WTC11 (cell line): ENCODE measurements at regions of chr18 and their contacts with region 1.

Region 1: DNA sequence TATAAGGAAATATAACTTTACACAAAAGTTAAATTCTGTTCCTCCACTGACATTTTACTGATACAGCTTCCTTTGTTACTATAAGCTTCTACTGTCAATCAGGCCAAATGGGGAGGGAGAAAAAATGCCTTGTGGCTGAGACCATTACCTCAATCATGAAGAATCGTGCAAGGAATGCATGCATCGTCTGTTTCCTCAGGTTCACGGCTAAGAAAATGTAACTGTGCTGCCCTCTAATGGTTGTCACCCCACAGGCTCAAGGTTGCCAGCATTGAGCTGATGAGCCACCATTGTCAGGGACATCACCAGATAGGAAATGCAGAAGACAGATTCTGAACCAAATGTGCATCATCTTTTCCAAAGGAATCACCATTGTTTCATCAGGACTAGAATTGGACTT is 426.9 kb downstream of the CDH2 start:
- DNase-seq: peak; percentile 69
- ATAC-seq: peak; percentile 98
- H3K4me3 Mint-ChIP-seq: no peak overlapping the region
- H3K27ac Mint-ChIP-seq: no peak overlapping the region
- H3K4me1 Mint-ChIP-seq: peaks cover 15% of the 10 kb centered on the region
- H3K27me3 Mint-ChIP-seq: no peaks in the 10 kb centered on the region
- CTCF ChIP-seq: peak; percentile 40

Region 2: GRCh38 chr18:27558388-27559155 is 191.4 kb before region 1 on chr18:
- CTCF ChIA-PET with region 1: no interaction called
- POLR2A ChIA-PET with region 1: no interaction called
- DNase-seq: no peak
- ATAC-seq: no peak
- H3K4me3 Mint-ChIP-seq: no peak overlapping the region
- H3K27ac Mint-ChIP-seq: peak overlapping the region; percentile 27
- H3K4me1 Mint-ChIP-seq: peaks cover 67% of the 10 kb centered on the region
- H3K27me3 Mint-ChIP-seq: peaks cover 4% of the 10 kb centered on the region
- CTCF ChIP-seq: no peak

Region 3: DNA sequence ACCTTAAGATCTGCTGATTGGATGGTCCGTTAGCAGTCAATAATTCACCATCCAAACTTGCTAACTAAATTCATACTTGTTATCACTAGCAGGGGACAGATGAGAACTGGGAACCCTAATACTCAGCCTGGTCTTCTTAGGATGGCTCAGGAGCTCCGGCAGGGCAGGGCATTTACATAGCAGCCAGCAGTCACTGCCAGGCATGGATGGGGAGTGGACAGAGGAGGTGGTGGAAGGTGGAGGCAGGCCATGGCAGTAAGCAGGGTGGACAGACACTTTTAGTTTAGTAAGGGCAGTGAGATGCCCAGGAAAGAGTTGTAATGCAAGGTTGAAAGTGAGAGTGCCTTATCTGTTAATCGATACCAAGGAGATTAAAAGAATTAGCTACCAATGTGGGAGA is 172.7 kb before region 1 on chr18:
- CTCF ChIA-PET with region 1: no interaction called
- POLR2A ChIA-PET with region 1: no interaction called
- DNase-seq: no peak
- ATAC-seq: peak; percentile 79
- H3K4me3 Mint-ChIP-seq: no peak overlapping the region
- H3K27ac Mint-ChIP-seq: peak overlapping the region; percentile 26
- H3K4me1 Mint-ChIP-seq: peaks cover 19% of the 10 kb centered on the region
- H3K27me3 Mint-ChIP-seq: no peaks in the 10 kb centered on the region
- CTCF ChIP-seq: no peak

Region 4: DNA sequence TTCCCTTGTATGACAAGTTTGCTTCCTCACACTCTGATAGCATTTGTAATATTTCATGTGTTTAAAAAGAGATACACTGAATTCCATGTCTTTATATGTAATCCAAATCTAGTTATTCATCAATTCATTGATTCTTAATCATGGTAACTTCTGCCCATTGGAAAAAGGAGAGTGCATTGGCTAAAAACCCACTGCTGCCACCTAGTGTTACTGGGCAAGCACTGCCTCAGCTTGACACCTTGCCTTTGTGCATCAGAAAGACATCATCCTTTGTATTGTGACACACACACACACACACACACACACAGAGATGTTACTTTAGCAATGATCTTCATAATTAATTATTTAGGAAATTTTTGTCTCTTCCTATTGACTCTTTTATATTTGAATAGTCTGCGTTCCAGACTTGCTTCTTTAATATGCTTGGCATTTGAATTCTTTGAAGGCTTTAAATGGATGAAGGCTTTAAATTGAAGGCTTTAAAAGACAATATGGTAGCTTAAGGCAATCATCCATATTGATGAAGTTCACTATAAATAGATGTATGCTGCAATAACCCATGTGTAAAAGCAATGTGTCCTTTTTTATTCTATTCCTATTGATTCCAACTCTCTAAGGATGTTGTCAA is 150.7 kb before region 1 on chr18:
- CTCF ChIA-PET with region 1: interaction called, 146 read pairs
- POLR2A ChIA-PET with region 1: interaction called, 4 read pairs
- DNase-seq: peak; percentile 68
- ATAC-seq: peak; percentile 59
- H3K4me3 Mint-ChIP-seq: no peak overlapping the region
- H3K27ac Mint-ChIP-seq: no peak overlapping the region
- H3K4me1 Mint-ChIP-seq: peaks cover 33% of the 10 kb centered on the region
- H3K27me3 Mint-ChIP-seq: no peaks in the 10 kb centered on the region
- CTCF ChIP-seq: peak; percentile 81

Region 5: DNA sequence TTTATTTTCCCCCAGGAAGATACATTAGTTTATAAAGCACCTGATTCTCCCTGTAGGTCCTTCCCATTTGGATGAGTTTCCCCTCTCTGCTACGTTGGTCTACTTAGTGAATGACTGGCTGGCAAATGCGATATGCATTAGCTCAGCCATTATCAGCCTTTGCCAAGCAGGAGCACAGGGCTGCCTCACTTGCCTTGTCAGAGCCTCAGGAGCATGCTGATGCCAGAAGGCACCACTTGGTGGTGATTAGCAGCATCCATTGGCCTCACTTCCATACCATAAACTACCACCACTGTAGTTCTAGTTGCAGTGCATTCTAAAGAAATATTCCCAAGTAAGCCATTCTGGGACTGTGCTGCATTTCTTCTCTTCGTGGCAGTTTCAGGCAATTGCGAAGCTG is 122.1 kb before region 1 on chr18:
- CTCF ChIA-PET with region 1: interaction called, 27 read pairs
- POLR2A ChIA-PET with region 1: no interaction called
- DNase-seq: peak; percentile 27
- ATAC-seq: peak; percentile 99
- H3K4me3 Mint-ChIP-seq: no peak overlapping the region
- H3K27ac Mint-ChIP-seq: no peak overlapping the region
- H3K4me1 Mint-ChIP-seq: no peaks in the 10 kb centered on the region
- H3K27me3 Mint-ChIP-seq: no peaks in the 10 kb centered on the region
- CTCF ChIP-seq: no peak

Region 6: GRCh38 chr18:27685807-27686412 is 64.1 kb before region 1 on chr18:
- CTCF ChIA-PET with region 1: interaction called, 40 read pairs
- POLR2A ChIA-PET with region 1: no interaction called
- DNase-seq: peak; percentile 32
- ATAC-seq: no peak
- H3K4me3 Mint-ChIP-seq: no peak overlapping the region
- H3K27ac Mint-ChIP-seq: no peak overlapping the region
- H3K4me1 Mint-ChIP-seq: no peaks in the 10 kb centered on the region
- H3K27me3 Mint-ChIP-seq: no peaks in the 10 kb centered on the region
- CTCF ChIP-seq: peak; percentile 76

Region 7: GRCh38 chr18:27762054-27762453 is 12.0 kb after region 1 on chr18:
- CTCF ChIA-PET with region 1: interaction called, 14 read pairs
- POLR2A ChIA-PET with region 1: no interaction called
- DNase-seq: no peak
- ATAC-seq: no peak
- H3K4me3 Mint-ChIP-seq: no peak overlapping the region
- H3K27ac Mint-ChIP-seq: no peak overlapping the region
- H3K4me1 Mint-ChIP-seq: peaks cover 19% of the 10 kb centered on the region
- H3K27me3 Mint-ChIP-seq: no peaks in the 10 kb centered on the region
- CTCF ChIP-seq: no peak

Region 8: GRCh38 chr18:27789406-27789805 is 39.4 kb after region 1 on chr18:
- CTCF ChIA-PET with region 1: interaction called, 10 read pairs
- POLR2A ChIA-PET with region 1: no interaction called
- DNase-seq: no peak
- ATAC-seq: no peak
- H3K4me3 Mint-ChIP-seq: no peak overlapping the region
- H3K27ac Mint-ChIP-seq: no peak overlapping the region
- H3K4me1 Mint-ChIP-seq: peaks cover 17% of the 10 kb centered on the region
- H3K27me3 Mint-ChIP-seq: 0 out of 2 replicates have a peak, but pooled peaks cover 2% of the 10 kb centered on the region
- CTCF ChIP-seq: no peak

Region 9: GRCh38 chr18:28062443-28062842 is 312.4 kb after region 1 on chr18:
- CTCF ChIA-PET with region 1: no interaction called
- POLR2A ChIA-PET with region 1: no interaction called
- DNase-seq: no peak
- ATAC-seq: no peak
- H3K4me3 Mint-ChIP-seq: no peak overlapping the region
- H3K27ac Mint-ChIP-seq: no peak overlapping the region
- H3K4me1 Mint-ChIP-seq: peaks cover 15% of the 10 kb centered on the region
- H3K27me3 Mint-ChIP-seq: no peaks in the 10 kb centered on the region
- CTCF ChIP-seq: no peak